B cell (primary cell): ENCODE measurements at regions of chr9 and their contacts with region 1.

Region 1: GRCh38 chr9:127770905-127771569 is 7.4 kb downstream of the SH2D3C start:
- DNase-seq: peak; percentile 95
- ATAC-seq: peak; percentile 86
- H3K4me3 ChIP-seq: peak overlapping the region; percentile 43 to 73 (median 64)
- H3K4me3 Mint-ChIP-seq: peak overlapping the region; percentile 94
- H3K27ac ChIP-seq: peak overlapping the region; percentile 77 to 94
- H3K27ac Mint-ChIP-seq: peak overlapping the region; percentile 95
- H3K4me1 ChIP-seq: peaks cover 55 to 90% of the 10 kb centered on the region in 2 donors
- H3K4me1 Mint-ChIP-seq: peaks cover 68% of the 10 kb centered on the region
- H3K27me3 ChIP-seq: no peaks in the 10 kb centered on the region
- H3K27me3 Mint-ChIP-seq: no peaks in the 10 kb centered on the region
- CTCF ChIP-seq: no peak

Region 2: DNA sequence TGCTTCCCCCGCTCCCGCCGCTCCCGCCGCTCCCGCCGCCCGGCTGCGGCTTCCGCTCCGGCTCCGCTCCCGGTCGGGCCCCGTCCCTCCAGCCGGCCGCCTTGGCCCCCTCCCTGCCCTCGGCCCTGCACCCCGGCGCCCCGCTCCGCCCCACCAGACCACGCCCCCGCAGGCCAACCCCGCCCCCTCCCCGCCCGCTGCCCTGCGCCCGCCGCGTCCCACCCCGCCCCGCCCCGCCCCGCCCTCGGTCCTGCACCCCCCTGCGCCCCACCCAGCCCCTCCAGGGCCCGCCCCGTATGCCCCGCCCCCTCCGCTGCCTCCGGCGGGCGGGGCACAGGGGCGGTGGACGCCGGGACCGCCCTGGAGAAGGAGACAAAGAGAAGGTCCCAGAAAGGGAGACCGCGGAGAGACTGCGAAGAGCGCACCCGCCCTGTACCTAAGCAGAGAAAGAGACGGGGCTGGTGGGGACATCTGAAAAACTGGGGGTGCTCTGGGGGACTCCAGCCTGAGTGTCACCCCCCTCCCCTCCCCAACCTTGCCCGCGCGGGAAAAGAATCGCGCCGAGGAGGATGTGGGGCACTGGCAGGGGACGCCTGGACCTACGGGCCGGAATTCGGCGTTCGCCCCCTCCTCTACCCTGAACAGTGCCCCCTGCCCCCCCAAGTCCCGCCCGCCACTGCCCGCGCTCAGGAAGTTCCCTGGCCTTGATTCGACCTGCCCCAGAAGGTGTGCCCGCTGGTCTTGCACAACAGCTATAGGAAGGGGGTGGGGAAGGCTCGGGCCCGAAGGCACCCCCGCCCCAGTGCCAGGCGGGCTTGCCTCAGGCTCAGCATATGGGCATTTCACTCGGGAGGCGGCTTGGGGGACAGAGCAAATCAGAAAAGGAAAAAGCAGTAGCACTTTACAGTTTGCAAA is 201.8 kb before region 1 on chr9:
- CTCF ChIA-PET with region 1: no interaction called
- POLR2A ChIA-PET with region 1: no interaction called
- intact Hi-C with region 1: loop called (anchors 2 kb)
- DNase-seq: peak; percentile 80
- ATAC-seq: peak; percentile 92
- H3K4me3 ChIP-seq: peak overlapping the region in 4 of 5 experiments; percentile 53 to 72 (median 65)
- H3K4me3 Mint-ChIP-seq: peak overlapping the region; percentile 93
- H3K27ac ChIP-seq: no peak overlapping the region
- H3K27ac Mint-ChIP-seq: peak overlapping the region; percentile 81
- H3K4me1 ChIP-seq: peaks cover 18 to 24% of the 10 kb centered on the region in 2 donors
- H3K4me1 Mint-ChIP-seq: peaks cover 14% of the 10 kb centered on the region
- H3K27me3 ChIP-seq: peaks cover 0 to 7% (median 0%) of the 10 kb centered on the region in 4 experiments
- H3K27me3 Mint-ChIP-seq: no peaks in the 10 kb centered on the region
- CTCF ChIP-seq: no peak

Region 3: GRCh38 chr9:127611899-127612790 is 158.9 kb before region 1 on chr9 and contains the start of gene STXBP1:
- CTCF ChIA-PET with region 1: no interaction called
- POLR2A ChIA-PET with region 1: no interaction called
- intact Hi-C with region 1: loop called (anchors 10 kb)
- DNase-seq: peak; percentile 91
- ATAC-seq: peak; percentile 94
- H3K4me3 ChIP-seq: peak within 1 kb of the TSS; percentile 55 to 84 (median 60)
- H3K4me3 Mint-ChIP-seq: peak within 1 kb of the TSS; percentile 98
- H3K27ac ChIP-seq: no peak within 1 kb of the TSS
- H3K27ac Mint-ChIP-seq: peak within 1 kb of the TSS; percentile 80
- H3K4me1 ChIP-seq: peaks cover 28 to 31% of the 10 kb centered on the region in 2 donors
- H3K4me1 Mint-ChIP-seq: peaks cover 25% of the 10 kb centered on the region
- H3K27me3 ChIP-seq: peaks cover 0 to 39% (median 33%) of the 10 kb centered on the region in 4 experiments
- H3K27me3 Mint-ChIP-seq: peaks cover 44% of the 10 kb centered on the region
- CTCF ChIP-seq: no peak
- total RNA-seq, gene STXBP1: 0.62 and 0.78 TPM in 2 replicates

Region 4: GRCh38 chr9:127785023-127785932 is 14.2 kb after region 1 on chr9:
- CTCF ChIA-PET with region 1: interaction called, 47 read pairs
- POLR2A ChIA-PET with region 1: interaction called, 37 read pairs
- intact Hi-C with region 1: loop called (anchors 1 kb)
- DNase-seq: peak; percentile 95
- ATAC-seq: peak; percentile 62
- H3K4me3 ChIP-seq: peak overlapping the region in 4 of 5 experiments; percentile 48 to 99 (median 92)
- H3K4me3 Mint-ChIP-seq: peak overlapping the region; percentile 90
- H3K27ac ChIP-seq: peak overlapping the region; percentile 91 to 95
- H3K27ac Mint-ChIP-seq: peak overlapping the region; percentile 98
- H3K4me1 ChIP-seq: peaks cover 44 to 60% of the 10 kb centered on the region in 2 donors
- H3K4me1 Mint-ChIP-seq: peaks cover 56% of the 10 kb centered on the region
- H3K27me3 ChIP-seq: no peaks in the 10 kb centered on the region
- H3K27me3 Mint-ChIP-seq: no peaks in the 10 kb centered on the region
- CTCF ChIP-seq: peak; percentile 80

Region 5: GRCh38 chr9:127802576-127803443 is 31.8 kb after region 1 on chr9 and contains the start of gene FPGS:
- CTCF ChIA-PET with region 1: interaction called, 3 read pairs
- POLR2A ChIA-PET with region 1: interaction called, 5 read pairs
- intact Hi-C with region 1: loop called (anchors 1 kb)
- DNase-seq: peak; percentile 93
- ATAC-seq: peak; percentile 84
- H3K4me3 ChIP-seq: peak within 1 kb of the TSS; percentile 65 to 96 (median 88)
- H3K4me3 Mint-ChIP-seq: peak within 1 kb of the TSS; percentile 91
- H3K27ac ChIP-seq: peak within 1 kb of the TSS; percentile 68 to 90
- H3K27ac Mint-ChIP-seq: peak within 1 kb of the TSS; percentile 92
- H3K4me1 ChIP-seq: peaks cover 20 to 31% of the 10 kb centered on the region in 2 donors
- H3K4me1 Mint-ChIP-seq: peaks cover 33% of the 10 kb centered on the region
- H3K27me3 ChIP-seq: no peaks in the 10 kb centered on the region
- H3K27me3 Mint-ChIP-seq: no peaks in the 10 kb centered on the region
- CTCF ChIP-seq: no peak
- total RNA-seq, gene FPGS: 136 and 137 TPM in 2 replicates

Region 6: GRCh38 chr9:127828262-127829031 is 57.4 kb after region 1 on chr9:
- CTCF ChIA-PET with region 1: no interaction called
- POLR2A ChIA-PET with region 1: no interaction called
- intact Hi-C with region 1: no loop called
- DNase-seq: no peak
- ATAC-seq: no peak
- H3K4me3 ChIP-seq: no peak overlapping the region
- H3K4me3 Mint-ChIP-seq: no peak overlapping the region
- H3K27ac ChIP-seq: no peak overlapping the region
- H3K27ac Mint-ChIP-seq: no peak overlapping the region
- H3K4me1 ChIP-seq: no peaks in the 10 kb centered on the region
- H3K4me1 Mint-ChIP-seq: peaks cover under 1% of the 10 kb centered on the region
- H3K27me3 ChIP-seq: no peaks in the 10 kb centered on the region
- H3K27me3 Mint-ChIP-seq: no peaks in the 10 kb centered on the region
- CTCF ChIP-seq: no peak

Region 7: DNA sequence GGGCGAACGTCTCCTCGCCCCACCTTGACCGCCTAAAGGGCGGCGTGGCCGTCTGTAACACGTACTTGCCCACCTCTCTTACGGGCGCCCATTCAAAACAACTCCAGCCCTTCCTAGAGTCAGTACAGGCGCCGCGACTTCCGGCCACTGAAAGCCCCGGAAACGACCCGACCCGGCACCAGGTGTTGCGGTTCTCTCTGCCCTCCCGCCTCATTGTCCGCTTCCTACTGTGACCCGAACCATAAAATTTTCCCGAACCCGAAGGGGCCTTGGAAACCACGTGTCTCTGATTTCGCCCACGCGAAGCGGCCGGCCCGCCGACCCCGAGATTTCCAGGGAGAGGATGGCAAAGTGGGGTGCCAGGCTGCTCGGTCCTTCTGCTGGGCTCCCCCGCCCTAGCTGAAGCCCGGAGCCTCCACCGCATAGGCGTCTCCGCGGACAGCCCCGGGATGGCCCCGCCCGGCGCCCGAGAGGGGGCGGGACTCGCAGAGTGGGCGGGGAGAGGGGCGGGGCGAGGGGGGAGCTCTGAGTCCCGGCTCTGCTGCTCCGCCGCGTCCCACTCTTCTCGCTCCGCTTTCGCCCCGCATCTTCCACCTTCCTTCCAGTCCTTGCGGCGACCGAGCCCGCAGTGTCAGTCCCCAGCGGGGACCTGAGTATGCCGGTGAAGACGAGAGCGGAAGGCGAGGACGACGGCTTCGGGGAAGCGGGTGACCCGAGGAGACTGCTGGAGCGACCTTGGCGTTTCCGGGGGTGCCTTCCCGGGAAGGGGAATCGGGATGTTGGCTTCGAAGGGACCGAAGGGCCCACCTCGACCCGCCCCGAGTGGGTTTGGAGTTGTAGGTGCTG is 357.2 kb after region 1 on chr9:
- CTCF ChIA-PET with region 1: no interaction called
- POLR2A ChIA-PET with region 1: no interaction called
- intact Hi-C with region 1: loop called (anchors 10 kb)
- DNase-seq: peak; percentile 97
- ATAC-seq: peak; percentile 78
- H3K4me3 ChIP-seq: peak overlapping the region; percentile 58 to 97 (median 83)
- H3K4me3 Mint-ChIP-seq: peak overlapping the region; percentile 95
- H3K27ac ChIP-seq: peak overlapping the region; percentile 93 to 99
- H3K27ac Mint-ChIP-seq: peak overlapping the region; percentile 99
- H3K4me1 ChIP-seq: peaks cover 26 to 34% of the 10 kb centered on the region in 2 donors
- H3K4me1 Mint-ChIP-seq: peaks cover 35% of the 10 kb centered on the region
- H3K27me3 ChIP-seq: peaks cover 0 to 6% (median 0%) of the 10 kb centered on the region in 4 experiments
- H3K27me3 Mint-ChIP-seq: peaks cover 7% of the 10 kb centered on the region
- CTCF ChIP-seq: no peak